A673 (cell line): ENCODE measurements at regions of chr1 and their contacts with region 1.

Region 1: GRCh38 chr1:182884872-182885271 is 45.7 kb downstream of the DHX9 start:
- DNase-seq: no peak
- H3K4me3 ChIP-seq: no peak overlapping the region
- H3K27ac ChIP-seq: no peak overlapping the region
- H3K4me1 ChIP-seq: no peaks in the 10 kb centered on the region
- H3K27me3 ChIP-seq: no peaks in the 10 kb centered on the region
- CTCF ChIP-seq: no peak

Region 2: DNA sequence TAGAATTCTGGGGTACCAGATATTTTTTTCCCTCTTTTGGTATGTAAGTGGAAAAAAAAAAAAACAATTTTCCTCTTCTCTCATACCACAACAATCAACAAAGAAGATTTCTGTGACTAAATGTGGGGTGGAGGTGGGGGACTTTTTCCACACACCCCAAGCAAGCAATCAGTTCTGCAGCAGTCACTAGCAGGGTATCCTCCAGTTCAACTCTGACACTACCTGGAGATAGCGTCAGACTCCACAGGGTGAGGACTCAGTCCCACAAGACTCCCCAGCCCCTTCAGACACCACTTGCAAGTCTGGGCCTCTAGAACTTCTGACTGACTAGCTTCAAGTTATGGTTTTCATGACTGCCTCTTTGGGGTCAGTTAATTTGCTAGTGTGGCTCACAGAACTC is 39.5 kb before region 1 on chr1:
- CTCF ChIA-PET with region 1: no interaction called
- POLR2A ChIA-PET with region 1: no interaction called
- intact Hi-C with region 1: loop called (anchors 5 kb)
- DNase-seq: no peak
- H3K4me3 ChIP-seq: no peak overlapping the region
- H3K27ac ChIP-seq: no peak overlapping the region
- H3K4me1 ChIP-seq: peaks cover 20% of the 10 kb centered on the region
- H3K27me3 ChIP-seq: no peaks in the 10 kb centered on the region
- CTCF ChIP-seq: no peak

Region 3: GRCh38 chr1:182952677-182953431 is 68.0 kb after region 1 on chr1 and contains the start of gene SHCBP1L:
- CTCF ChIA-PET with region 1: no interaction called
- POLR2A ChIA-PET with region 1: no interaction called
- intact Hi-C with region 1: no loop called
- DNase-seq: no peak
- H3K4me3 ChIP-seq: no peak within 1 kb of the TSS
- H3K27ac ChIP-seq: no peak within 1 kb of the TSS
- H3K4me1 ChIP-seq: no peaks in the 10 kb centered on the region
- H3K27me3 ChIP-seq: no peaks in the 10 kb centered on the region
- CTCF ChIP-seq: no peak
- total RNA-seq, gene SHCBP1L: not detected in 2 replicates